HAP-1 (cell line): ENCODE measurements at regions of chr13 and their contacts with region 1.

Region 1: GRCh38 chr13:26707122-26708006 is 53.2 kb downstream of the GPR12 start:
- DNase-seq: peak; percentile 28 to 56
- H3K4me3 ChIP-seq: no peak overlapping the region
- H3K4me1 ChIP-seq: no peaks in the 10 kb centered on the region
- H3K27me3 ChIP-seq: peaks cover 4% of the 10 kb centered on the region; the same call in 1 of the 2 replicates

Region 2: DNA sequence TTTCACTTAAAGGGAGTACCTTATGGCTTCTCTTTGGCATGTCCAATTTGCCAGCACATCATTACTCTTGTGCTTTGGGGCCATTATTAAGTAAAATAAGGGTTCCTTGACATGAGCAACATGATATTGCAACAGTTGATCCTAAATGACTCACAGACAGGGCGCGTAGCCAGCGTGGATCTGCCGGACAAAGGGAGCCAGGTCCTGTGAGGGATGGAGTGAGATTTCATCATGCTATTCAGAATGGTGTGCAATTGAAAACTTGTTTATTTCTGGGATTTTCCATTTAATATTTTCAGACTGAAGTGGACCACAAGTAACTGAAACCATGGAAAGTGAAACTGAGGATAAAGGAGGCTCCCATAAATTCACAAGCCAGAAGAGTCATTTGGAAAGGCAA is 198.5 kb before region 1 on chr13:
- in situ Hi-C with region 1: no loop called
- DNase-seq: no peak
- H3K4me3 ChIP-seq: no peak overlapping the region
- H3K4me1 ChIP-seq: no peaks in the 10 kb centered on the region
- H3K27me3 ChIP-seq: no peaks in the 10 kb centered on the region

Region 3: GRCh38 chr13:26658448-26659385 is 48.6 kb before region 1 on chr13:
- in situ Hi-C with region 1: no loop called
- DNase-seq: no peak
- H3K4me3 ChIP-seq: no peak overlapping the region
- H3K4me1 ChIP-seq: no peaks in the 10 kb centered on the region
- H3K27me3 ChIP-seq: no peaks in the 10 kb centered on the region

Region 4: GRCh38 chr13:26872525-26873385 is 165.4 kb after region 1 on chr13:
- in situ Hi-C with region 1: loop called (anchors 5 kb)
- DNase-seq: peak; percentile 17 to 81
- H3K4me3 ChIP-seq: no peak overlapping the region
- H3K4me1 ChIP-seq: no peaks in the 10 kb centered on the region
- H3K27me3 ChIP-seq: no peaks in the 10 kb centered on the region

Region 5: DNA sequence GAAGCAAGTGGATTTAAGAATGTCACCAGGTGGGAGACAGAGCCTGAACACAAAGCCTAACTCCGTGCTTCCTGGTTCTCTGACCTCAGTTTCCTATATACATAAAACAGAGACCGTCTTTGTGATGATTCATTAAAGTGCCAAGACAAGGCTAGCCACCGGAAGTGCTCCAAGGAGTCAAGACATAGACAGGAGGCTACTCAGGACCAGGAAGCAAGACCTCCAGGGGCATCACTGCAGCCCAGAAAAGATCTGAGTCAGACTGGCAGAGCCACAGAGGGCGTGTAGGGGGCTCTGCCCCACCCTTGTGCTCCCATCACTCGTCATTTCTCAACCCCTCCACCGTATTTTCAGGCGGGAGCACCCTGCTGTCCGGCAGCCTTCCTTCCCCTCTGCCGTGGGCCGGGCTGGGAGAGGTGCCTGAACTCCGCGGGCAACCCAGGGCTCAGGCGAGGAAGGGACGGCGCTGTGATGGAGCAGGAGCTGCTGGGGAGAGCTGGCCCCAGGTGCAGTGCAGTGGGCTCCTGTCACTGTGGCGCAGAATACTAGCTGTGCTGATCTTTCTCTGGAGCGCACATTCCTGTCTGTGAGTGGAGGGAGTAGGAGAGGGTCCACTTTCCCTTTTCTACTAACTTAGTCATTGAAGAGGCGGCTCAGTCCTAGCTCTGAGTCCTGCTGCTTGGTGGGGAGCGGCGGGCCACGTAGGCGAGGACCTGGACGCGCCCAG is 187.9 kb after region 1 on chr13:
- in situ Hi-C with region 1: no loop called
- DNase-seq: no peak
- H3K4me3 ChIP-seq: no peak overlapping the region
- H3K4me1 ChIP-seq: no peaks in the 10 kb centered on the region
- H3K27me3 ChIP-seq: no peaks in the 10 kb centered on the region; the same call in 1 of the 2 replicates